ENCODE measurements at regions of chr9 and their contacts with region 1.

Region 1: DNA sequence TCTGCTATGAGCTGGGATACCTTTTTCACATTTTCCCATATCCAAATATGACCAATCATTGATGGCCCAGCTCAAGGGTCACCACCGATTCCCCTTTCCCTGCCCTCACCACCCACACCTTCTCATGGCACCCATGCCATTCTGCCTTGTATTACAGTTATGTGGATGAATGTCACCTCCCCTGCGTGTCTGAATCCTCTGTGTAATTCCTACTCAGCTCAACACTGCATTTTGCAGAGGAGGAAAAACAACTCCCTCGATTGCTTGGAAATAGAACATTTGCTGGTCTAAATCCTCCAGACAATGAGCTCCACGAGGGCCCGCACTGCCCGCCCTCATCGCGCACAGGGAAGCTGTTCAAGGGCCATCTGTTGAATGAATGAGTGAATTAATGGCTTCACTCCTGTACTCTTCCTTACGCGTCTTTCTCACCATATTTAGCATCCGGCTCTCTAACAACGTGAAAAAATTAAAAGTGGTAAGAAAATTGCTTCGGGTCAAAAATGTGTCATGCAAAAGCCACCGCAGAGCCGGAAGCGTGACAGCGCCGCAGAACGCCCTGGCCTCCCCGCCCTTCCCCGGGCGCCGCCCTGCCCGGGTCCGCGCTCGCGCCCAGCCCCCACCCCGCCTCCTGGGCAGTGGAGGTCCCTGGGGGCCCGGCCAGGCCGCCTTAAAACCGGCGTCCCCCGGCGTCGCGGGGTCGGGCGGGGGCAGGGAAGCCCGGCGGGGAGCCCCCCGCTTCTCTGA is 706 bp downstream of the SUSD1 start:
- DNase-seq: peak; percentile 70
- ATAC-seq: peak; percentile 83
- H3K4me3 ChIP-seq: peak overlapping the region; percentile 22 to 80 (median 56)
- H3K4me3 Mint-ChIP-seq: peak overlapping the region; percentile 92
- H3K27ac ChIP-seq: peak overlapping the region; percentile 17 to 49
- H3K27ac Mint-ChIP-seq: peak overlapping the region; percentile 83
- H3K4me1 ChIP-seq: peaks cover 21 to 27% of the 10 kb centered on the region in 2 donors
- H3K4me1 Mint-ChIP-seq: peaks cover 50% of the 10 kb centered on the region
- H3K27me3 ChIP-seq: no peaks in the 10 kb centered on the region
- H3K27me3 Mint-ChIP-seq: no peaks in the 10 kb centered on the region
- CTCF ChIP-seq: no peak

Region 2: DNA sequence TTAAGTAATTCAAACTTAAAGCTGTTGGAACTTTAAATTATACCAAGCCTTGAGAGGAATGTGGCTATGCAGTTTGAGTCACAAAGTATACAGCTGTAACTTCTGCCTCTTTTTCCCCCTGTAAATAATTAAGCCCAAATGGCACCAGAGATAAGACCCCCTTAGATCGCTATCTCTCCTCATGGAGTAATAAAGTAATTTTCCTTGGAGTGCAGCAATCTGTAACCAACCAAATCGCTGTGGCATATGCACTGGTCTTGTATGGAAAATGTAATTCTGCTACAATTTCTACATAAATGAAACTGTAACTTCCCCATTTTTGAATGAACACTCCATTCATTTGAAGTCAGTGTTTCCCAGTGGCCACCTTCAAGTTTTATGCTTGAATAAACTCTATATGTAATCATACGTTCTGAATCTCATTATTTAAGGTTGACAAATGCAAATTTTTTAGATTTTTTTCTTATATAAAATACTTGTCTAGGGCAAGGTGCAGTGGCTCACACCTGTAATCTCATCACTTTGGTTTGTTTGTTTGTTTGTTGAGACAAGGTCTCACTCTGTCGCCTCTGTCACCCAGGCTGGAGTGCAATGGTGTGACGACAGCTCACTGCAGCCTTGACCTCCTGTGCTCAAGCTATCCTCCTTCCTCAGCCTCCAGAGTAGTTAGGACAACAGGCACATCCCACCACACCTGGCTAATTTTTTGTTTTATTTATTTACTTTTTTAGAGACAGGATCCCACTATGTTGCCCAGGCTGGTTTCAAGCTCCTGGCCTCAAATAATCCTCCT is 11.6 kb before region 1 on chr9:
- CTCF ChIA-PET with region 1: interaction called, 3 read pairs
- POLR2A ChIA-PET with region 1: interaction called, 9 read pairs
- intact Hi-C with region 1: loop called (anchors 1 kb)
- DNase-seq: peak; percentile 54
- ATAC-seq: peak; percentile 85
- H3K4me3 ChIP-seq: no peak overlapping the region
- H3K4me3 Mint-ChIP-seq: peak overlapping the region; percentile 50
- H3K27ac ChIP-seq: peak overlapping the region in 1 of 2 donors; percentile 19
- H3K27ac Mint-ChIP-seq: peak overlapping the region; percentile 26
- H3K4me1 ChIP-seq: peaks cover 12 to 14% of the 10 kb centered on the region in 2 donors
- H3K4me1 Mint-ChIP-seq: peaks cover 17% of the 10 kb centered on the region
- H3K27me3 ChIP-seq: no peaks in the 10 kb centered on the region
- H3K27me3 Mint-ChIP-seq: no peaks in the 10 kb centered on the region
- CTCF ChIP-seq: no peak

Region 3: DNA sequence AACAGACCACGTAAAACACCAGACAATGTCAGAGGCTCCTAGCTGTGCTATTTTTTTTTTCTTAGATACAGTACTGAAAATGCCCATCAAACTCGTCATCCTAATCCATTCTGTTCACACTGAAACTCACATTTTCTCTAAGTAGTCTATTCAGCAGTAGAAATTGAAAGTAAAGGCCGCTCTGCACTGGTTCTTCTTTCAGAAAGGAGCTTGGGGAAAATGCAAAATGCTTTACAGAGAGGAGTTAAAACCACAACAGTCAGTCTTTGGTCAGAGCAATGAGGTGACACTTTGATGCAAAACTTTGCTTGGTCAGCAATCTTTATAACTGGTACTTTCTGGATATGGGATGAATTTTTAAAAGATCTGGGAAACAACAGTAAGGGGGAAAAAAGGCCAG is 44.5 kb after region 1 on chr9:
- CTCF ChIA-PET with region 1: interaction called, 4 read pairs
- POLR2A ChIA-PET with region 1: no interaction called
- intact Hi-C with region 1: loop called (anchors 2 kb)
- DNase-seq: peak; percentile 4
- ATAC-seq: peak; percentile 53
- H3K4me3 ChIP-seq: no peak overlapping the region
- H3K4me3 Mint-ChIP-seq: peak overlapping the region; percentile 48
- H3K27ac ChIP-seq: peak overlapping the region in 1 of 2 donors; percentile 17
- H3K27ac Mint-ChIP-seq: peak overlapping the region; percentile 74
- H3K4me1 ChIP-seq: no peaks in the 10 kb centered on the region
- H3K4me1 Mint-ChIP-seq: peaks cover 22% of the 10 kb centered on the region
- H3K27me3 ChIP-seq: no peaks in the 10 kb centered on the region
- H3K27me3 Mint-ChIP-seq: no peaks in the 10 kb centered on the region
- CTCF ChIP-seq: no peak

Region 4: GRCh38 chr9:112379177-112380101 is 205.0 kb after region 1 on chr9:
- CTCF ChIA-PET with region 1: no interaction called
- POLR2A ChIA-PET with region 1: no interaction called
- intact Hi-C with region 1: no loop called
- DNase-seq: peak; percentile 96
- ATAC-seq: peak; percentile 93
- H3K4me3 ChIP-seq: peak overlapping the region; percentile 82 to 98 (median 89)
- H3K4me3 Mint-ChIP-seq: peak overlapping the region; percentile 95
- H3K27ac ChIP-seq: peak overlapping the region; percentile 78 to 88
- H3K27ac Mint-ChIP-seq: peak overlapping the region; percentile 92
- H3K4me1 ChIP-seq: peaks cover 27 to 30% of the 10 kb centered on the region in 2 donors
- H3K4me1 Mint-ChIP-seq: peaks cover 59% of the 10 kb centered on the region
- H3K27me3 ChIP-seq: no peaks in the 10 kb centered on the region
- H3K27me3 Mint-ChIP-seq: no peaks in the 10 kb centered on the region
- CTCF ChIP-seq: no peak

Measured in B cell (primary cell).